ENCODE measurements at regions of chr6 and their contacts with region 1.

Region 1: DNA sequence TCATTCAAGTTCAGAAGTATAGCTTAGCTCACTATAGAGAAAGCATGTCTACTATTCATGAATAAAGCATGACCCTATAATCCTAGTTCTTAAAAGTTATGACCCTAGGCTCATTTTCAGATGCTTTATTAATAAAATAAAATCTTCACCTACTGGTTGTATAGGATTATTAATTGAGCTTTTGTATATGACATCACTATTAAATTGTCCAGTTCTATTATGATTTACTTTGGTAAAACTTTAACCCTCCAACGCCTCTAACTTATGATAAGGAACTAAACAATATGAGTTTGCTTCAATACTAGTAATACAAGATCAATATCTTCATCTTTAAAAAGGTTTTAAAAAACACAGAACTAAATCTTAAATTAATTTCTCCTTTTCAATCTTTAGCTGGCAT is 263.4 kb upstream of the THEMIS start:
- DNase-seq: no peak
- ATAC-seq: no peak
- H3K4me3 ChIP-seq: no peak overlapping the region
- H3K4me3 Mint-ChIP-seq: no peak overlapping the region
- H3K27ac ChIP-seq: no peak overlapping the region
- H3K27ac Mint-ChIP-seq: no peak overlapping the region
- H3K4me1 ChIP-seq: no peaks in the 10 kb centered on the region
- H3K4me1 Mint-ChIP-seq: no peaks in the 10 kb centered on the region
- H3K27me3 ChIP-seq: no peaks in the 10 kb centered on the region
- H3K27me3 Mint-ChIP-seq: no peaks in the 10 kb centered on the region
- CTCF ChIP-seq: no peak

Region 2: GRCh38 chr6:128179876-128180438 is 15.7 kb after region 1 on chr6:
- CTCF ChIA-PET with region 1: no interaction called
- POLR2A ChIA-PET with region 1: no interaction called
- intact Hi-C with region 1: loop called in 1 of 2 experiments (anchors 2 kb)
- DNase-seq: no peak
- ATAC-seq: no peak
- H3K4me3 ChIP-seq: no peak overlapping the region
- H3K4me3 Mint-ChIP-seq: no peak overlapping the region
- H3K27ac ChIP-seq: no peak overlapping the region
- H3K27ac Mint-ChIP-seq: no peak overlapping the region
- H3K4me1 ChIP-seq: no peaks in the 10 kb centered on the region
- H3K4me1 Mint-ChIP-seq: peaks cover 11% of the 10 kb centered on the region
- H3K27me3 ChIP-seq: no peaks in the 10 kb centered on the region
- H3K27me3 Mint-ChIP-seq: no peaks in the 10 kb centered on the region
- CTCF ChIP-seq: no peak